Ascending aorta (tissue), 2 donors: ENCODE measurements at regions of chr11 and their contacts with region 1.

Region 1: GRCh38 chr11:126303623-126304456 is at the start of gene DCPS:
- DNase-seq: peak; percentile 54 to 94
- H3K4me3 ChIP-seq: peak within 1 kb of the TSS; percentile 56 to 74
- H3K27ac ChIP-seq: peak within 1 kb of the TSS; percentile 80 to 94
- H3K4me1 ChIP-seq: peaks cover 0 to 6% of the 10 kb centered on the region in 2 donors
- H3K27me3 ChIP-seq: no peaks in the 10 kb centered on the region
- CTCF ChIP-seq: no peak
- total RNA-seq, gene DCPS: 19.6 TPM

Region 2: DNA sequence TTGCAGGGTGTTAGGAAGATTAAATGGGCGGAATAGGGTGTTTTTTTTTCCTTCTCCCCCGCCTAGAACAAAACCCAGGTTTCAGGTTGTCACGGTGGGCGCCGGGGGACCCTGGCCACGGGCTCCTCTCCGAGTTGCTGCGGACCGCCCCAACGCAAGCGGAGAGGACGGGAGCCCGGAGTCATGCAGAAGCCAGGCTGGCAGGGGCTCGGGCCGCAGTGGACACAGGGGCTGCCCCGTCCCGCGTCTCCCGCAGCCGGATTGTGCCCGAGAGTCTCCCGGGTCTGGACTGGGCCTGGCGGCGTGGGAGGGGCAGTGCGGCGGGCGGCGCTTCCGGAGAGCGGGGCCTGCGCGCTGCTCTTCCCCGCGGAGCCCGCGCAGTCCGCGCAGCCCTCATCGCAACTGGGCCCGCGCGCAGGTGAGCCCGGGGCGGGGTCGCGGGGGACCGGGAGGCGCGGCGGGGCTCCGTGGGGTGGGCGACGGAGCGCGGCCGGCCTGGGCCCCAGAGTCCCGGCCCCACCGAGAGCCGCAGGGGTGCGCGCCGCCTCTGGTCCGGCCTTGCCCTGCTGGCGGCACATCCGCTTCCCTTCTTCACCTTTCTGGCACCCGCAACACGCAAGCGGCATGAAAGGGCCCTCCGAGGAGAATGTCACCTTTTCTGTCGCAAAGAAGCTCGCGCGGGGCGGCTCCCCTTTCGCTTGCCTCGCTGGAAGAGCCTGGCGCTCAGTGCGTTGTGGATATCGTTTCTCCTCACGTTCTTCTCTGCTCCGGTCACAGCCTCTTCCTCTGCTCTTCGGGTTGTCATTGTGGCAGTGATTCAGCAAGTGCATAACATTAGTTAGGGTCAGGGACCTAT is 20.9 kb before region 1 on chr11 and contains the start of gene TIRAP:
- intact Hi-C with region 1: loop called (anchors 1 kb)
- DNase-seq: peak; percentile 24 to 83
- H3K4me3 ChIP-seq: peak within 1 kb of the TSS; percentile 81 to 86
- H3K27ac ChIP-seq: peak within 1 kb of the TSS; percentile 87 to 94
- H3K4me1 ChIP-seq: peaks cover 0 to 6% of the 10 kb centered on the region in 2 donors
- H3K27me3 ChIP-seq: no peaks in the 10 kb centered on the region
- CTCF ChIP-seq: no peak
- total RNA-seq, gene TIRAP: 8.7 TPM

Region 3: GRCh38 chr11:126416542-126417090 is 112.8 kb after region 1 on chr11:
- intact Hi-C with region 1: loop called (anchors 2 kb)
- DNase-seq: peak; percentile 44 to 93
- H3K4me3 ChIP-seq: peak overlapping the region; percentile 52 to 62
- H3K27ac ChIP-seq: peak overlapping the region; percentile 86 to 92
- H3K4me1 ChIP-seq: peaks cover 21 to 28% of the 10 kb centered on the region in 2 donors
- H3K27me3 ChIP-seq: no peaks in the 10 kb centered on the region
- CTCF ChIP-seq: no peak

Region 4: GRCh38 chr11:126561327-126561893 is 257.6 kb after region 1 on chr11:
- intact Hi-C with region 1: no loop called
- DNase-seq: no peak
- H3K4me3 ChIP-seq: no peak overlapping the region
- H3K27ac ChIP-seq: no peak overlapping the region
- H3K4me1 ChIP-seq: no peaks in the 10 kb centered on the region
- H3K27me3 ChIP-seq: no peaks in the 10 kb centered on the region
- CTCF ChIP-seq: no peak